MCF 10A (cell line): ENCODE measurements at regions of chr12 and their contacts with region 1.

Region 1: GRCh38 chr12:53451661-53452158 is at the start of gene PCBP2:
- DNase-seq: peak; percentile 99
- H3K4me3 Mint-ChIP-seq: peak within 1 kb of the TSS; percentile 92
- H3K27ac Mint-ChIP-seq: peak within 1 kb of the TSS; percentile 100
- H3K4me1 Mint-ChIP-seq: peaks cover 30% of the 10 kb centered on the region
- H3K27me3 Mint-ChIP-seq: no peaks in the 10 kb centered on the region
- CTCF ChIP-seq: peak; percentile 56
- total RNA-seq, gene PCBP2: 994 and 1,037 TPM in 2 replicates

Region 2: DNA sequence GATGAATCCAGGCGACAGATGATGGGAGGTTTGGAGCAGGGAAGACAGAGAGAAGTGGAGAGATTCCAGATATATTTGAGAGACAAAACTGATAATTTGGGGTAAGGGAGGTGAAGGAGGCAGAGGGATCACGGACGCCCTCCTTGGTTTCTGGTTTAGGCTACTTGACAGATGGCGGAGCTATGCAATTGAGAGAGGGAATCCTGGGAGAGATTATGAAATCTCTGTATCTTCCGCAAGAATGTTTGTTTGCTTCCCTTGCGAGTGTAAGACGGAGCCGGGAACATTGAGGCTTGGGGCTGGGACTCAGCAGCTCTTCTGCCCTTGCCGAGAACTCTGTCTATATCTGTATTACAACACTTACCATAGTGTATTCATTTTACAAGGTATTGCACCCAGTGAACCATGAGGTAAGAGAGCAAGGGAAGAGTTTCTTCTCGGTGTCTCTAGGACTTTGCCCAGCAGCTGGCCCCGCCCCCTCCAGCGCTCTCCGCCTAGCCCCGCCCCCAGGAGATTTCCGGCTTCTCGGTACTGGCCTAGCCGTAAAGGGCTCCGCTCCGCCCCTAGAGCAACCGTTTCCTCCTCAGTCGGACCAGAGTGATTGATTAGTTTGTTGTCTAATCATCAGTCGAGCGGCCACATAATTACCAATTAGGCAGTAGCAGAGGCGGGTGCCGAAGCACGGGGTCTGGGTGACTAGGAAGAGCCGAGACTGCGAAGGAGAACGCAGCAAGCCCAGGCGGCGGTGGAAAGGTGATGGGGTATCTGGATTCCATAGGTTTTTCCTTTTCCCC is 10.5 kb before region 1 on chr12 and contains the start of gene PRR13:
- CTCF ChIA-PET with region 1: no interaction called
- POLR2A ChIA-PET with region 1: interaction called, 16 read pairs
- intact Hi-C with region 1: no loop called
- DNase-seq: peak; percentile 99
- H3K4me3 Mint-ChIP-seq: peak within 1 kb of the TSS; percentile 95
- H3K27ac Mint-ChIP-seq: peak within 1 kb of the TSS; percentile 94
- H3K4me1 Mint-ChIP-seq: peaks cover 18% of the 10 kb centered on the region
- H3K27me3 Mint-ChIP-seq: no peaks in the 10 kb centered on the region
- CTCF ChIP-seq: no peak
- total RNA-seq, gene PRR13: 147 and 173 TPM in 2 replicates